ENCODE measurements at regions of chr12 and their contacts with region 1.

Region 1: DNA sequence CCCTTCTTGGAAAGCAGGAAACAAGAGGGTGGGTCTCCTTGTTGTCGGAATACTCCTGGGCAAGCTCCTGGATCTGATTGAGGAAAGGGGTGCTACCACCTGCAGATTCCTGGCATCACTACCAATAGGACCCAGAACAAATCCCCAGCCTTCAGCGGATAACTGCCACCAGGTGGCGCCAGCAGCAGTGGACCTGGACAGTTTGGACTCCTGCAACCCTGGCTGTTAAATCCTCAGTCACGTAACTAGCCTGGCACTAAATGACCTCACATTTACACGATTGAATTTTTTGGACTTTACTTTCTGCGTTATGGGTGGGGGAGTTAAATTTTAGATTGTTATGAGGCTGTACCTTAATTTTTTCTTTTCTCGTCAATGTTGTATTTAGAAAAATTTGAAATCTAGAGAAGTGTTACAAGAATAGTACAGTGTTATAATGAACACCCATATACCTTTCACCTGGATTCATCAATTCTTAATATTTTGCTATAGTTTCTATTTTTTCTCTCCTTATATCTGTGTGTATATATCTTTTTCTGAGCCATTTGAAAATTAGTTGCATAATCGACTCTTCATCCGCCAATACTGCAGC is 95.6 kb downstream of the GAS2L3 start:
- DNase-seq: no peak
- ATAC-seq: peak; percentile 94
- H3K4me3 ChIP-seq: no peak overlapping the region
- H3K27ac ChIP-seq: no peak overlapping the region
- H3K4me1 ChIP-seq: no peaks in the 10 kb centered on the region
- H3K27me3 ChIP-seq: no peaks in the 10 kb centered on the region; a peak in 2 of 4 replicates
- CTCF ChIP-seq: peak; percentile 80 to 93 (median 89)
- EP300 ChIP-seq: no peak
- POLR2A ChIP-seq: no peak
- RAD21 ChIP-seq: peak; percentile 66

Region 2: DNA sequence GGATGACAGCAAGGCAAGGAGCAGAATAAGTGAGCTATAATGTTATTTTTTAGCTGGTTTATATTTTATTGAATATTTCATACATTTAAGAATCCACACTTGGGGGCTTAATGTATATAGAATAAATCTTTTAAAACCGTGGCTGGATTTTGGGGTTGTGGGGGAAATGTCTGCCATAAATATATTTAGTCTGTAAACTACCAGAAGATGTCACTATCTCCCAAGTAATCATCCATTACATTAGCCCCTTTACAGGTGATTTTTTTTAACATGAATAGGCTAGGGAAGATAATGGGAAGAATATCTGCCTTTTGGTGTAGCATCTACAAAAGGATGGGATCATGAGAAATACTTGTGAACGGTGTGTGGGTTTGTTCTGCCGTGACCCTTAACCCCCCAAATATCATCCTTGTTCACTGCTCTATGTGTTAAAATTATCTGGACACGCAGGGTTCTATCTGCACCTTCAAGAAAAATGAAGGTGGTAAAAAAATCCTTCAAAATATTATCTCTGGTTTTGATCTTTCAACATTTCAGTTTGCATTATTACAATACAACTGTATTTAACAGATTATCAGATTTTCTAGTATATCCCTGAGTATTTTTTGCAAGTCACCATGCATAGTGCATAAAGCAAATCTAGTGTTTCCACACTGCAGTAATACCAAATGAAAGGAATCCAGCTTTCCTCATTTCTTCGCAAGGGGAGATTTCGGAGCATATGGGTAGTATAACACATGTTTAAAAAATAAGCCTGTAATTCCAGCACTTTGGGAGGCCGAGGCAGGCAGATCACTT is 320.2 kb before region 1 on chr12:
- CTCF ChIA-PET with region 1: interaction called, 30 read pairs
- POLR2A ChIA-PET with region 1: no interaction called
- RAD21 ChIA-PET with region 1: interaction called, 5 read pairs
- SMC1A ChIA-PET with region 1: interaction called, 9 read pairs
- in situ Hi-C with region 1: loop called (anchors 10 kb)
- intact Hi-C with region 1: loop called (anchors 2 kb)
- DNase-seq: no peak
- ATAC-seq: peak; percentile 58; the same call in 2 of the 3 replicates
- H3K4me3 ChIP-seq: no peak overlapping the region
- H3K27ac ChIP-seq: no peak overlapping the region
- H3K4me1 ChIP-seq: no peaks in the 10 kb centered on the region
- H3K27me3 ChIP-seq: no peaks in the 10 kb centered on the region
- CTCF ChIP-seq: peak in 2 of 3 experiments; percentile 8 to 48; a peak in 2 of 6 replicates
- EP300 ChIP-seq: no peak
- POLR2A ChIP-seq: no peak
- RAD21 ChIP-seq: peak; percentile 59

Region 3: DNA sequence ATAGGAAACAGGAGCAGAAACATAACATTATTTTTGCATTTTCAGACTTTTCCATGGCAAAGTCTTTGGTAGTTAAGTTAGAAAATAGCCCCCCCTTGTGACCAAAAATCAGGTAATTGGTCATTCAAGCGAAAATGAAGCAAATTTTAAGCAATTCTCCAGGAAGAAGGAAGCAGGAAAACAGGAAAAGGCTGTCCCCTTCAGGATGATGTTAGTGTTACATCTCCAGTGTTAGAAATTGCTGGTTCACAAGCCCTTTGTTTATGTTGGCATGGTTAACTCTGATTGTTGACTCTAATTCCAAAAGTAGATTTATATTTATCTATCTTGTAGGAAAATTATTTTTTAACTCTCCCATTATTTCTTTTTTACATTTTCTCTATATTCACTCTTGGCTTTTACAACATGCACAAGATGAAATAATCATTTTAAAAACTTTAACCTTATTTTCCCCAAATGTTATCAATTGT is 114.4 kb before region 1 on chr12:
- CTCF ChIA-PET with region 1: interaction called, 12 read pairs
- POLR2A ChIA-PET with region 1: no interaction called
- RAD21 ChIA-PET with region 1: interaction called, 3 read pairs
- SMC1A ChIA-PET with region 1: no interaction called
- in situ Hi-C with region 1: no loop called
- intact Hi-C with region 1: no loop called
- DNase-seq: no peak
- ATAC-seq: peak; percentile 34; the same call in 2 of the 3 replicates
- H3K4me3 ChIP-seq: no peak overlapping the region
- H3K27ac ChIP-seq: no peak overlapping the region
- H3K4me1 ChIP-seq: no peaks in the 10 kb centered on the region
- H3K27me3 ChIP-seq: no peaks in the 10 kb centered on the region
- CTCF ChIP-seq: peak; percentile 44 to 59 (median 50); a peak in 5 of 6 replicates
- EP300 ChIP-seq: no peak
- POLR2A ChIP-seq: no peak
- RAD21 ChIP-seq: peak; percentile 63

Region 4: GRCh38 chr12:100632445-100632892 is 36.6 kb before region 1 on chr12:
- CTCF ChIA-PET with region 1: interaction called, 13 read pairs
- POLR2A ChIA-PET with region 1: no interaction called
- RAD21 ChIA-PET with region 1: interaction called, 3 read pairs
- SMC1A ChIA-PET with region 1: interaction called, 4 read pairs
- in situ Hi-C with region 1: no loop called
- intact Hi-C with region 1: no loop called
- DNase-seq: peak; percentile 4
- ATAC-seq: peak; percentile 67
- H3K4me3 ChIP-seq: no peak overlapping the region
- H3K27ac ChIP-seq: no peak overlapping the region
- H3K4me1 ChIP-seq: no peaks in the 10 kb centered on the region
- H3K27me3 ChIP-seq: no peaks in the 10 kb centered on the region
- CTCF ChIP-seq: no peak
- EP300 ChIP-seq: no peak
- POLR2A ChIP-seq: no peak
- RAD21 ChIP-seq: no peak

Region 5: DNA sequence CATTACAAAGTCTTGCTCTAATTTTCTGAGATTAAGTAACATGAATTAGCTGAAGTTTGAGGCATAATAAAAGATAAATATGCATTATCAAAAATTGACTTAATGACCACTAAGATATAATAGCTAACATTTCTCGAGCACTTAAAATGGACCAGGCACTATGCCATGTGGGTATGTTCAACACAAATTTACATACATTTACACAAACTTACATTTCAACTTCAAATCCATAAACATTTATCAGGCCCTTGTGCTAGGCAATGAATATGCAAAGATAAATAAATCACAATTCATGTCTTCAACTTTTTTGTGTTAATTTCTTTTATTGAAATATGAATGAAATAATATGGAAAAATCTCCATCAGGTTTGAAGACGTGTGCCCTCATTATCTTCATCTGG is 13.1 kb after region 1 on chr12:
- CTCF ChIA-PET with region 1: interaction called, 13 read pairs
- POLR2A ChIA-PET with region 1: no interaction called
- RAD21 ChIA-PET with region 1: no interaction called
- SMC1A ChIA-PET with region 1: interaction called, 4 read pairs
- in situ Hi-C with region 1: no loop called
- intact Hi-C with region 1: no loop called
- DNase-seq: no peak
- ATAC-seq: no peak
- H3K4me3 ChIP-seq: no peak overlapping the region
- H3K27ac ChIP-seq: no peak overlapping the region
- H3K4me1 ChIP-seq: no peaks in the 10 kb centered on the region
- H3K27me3 ChIP-seq: no peaks in the 10 kb centered on the region
- CTCF ChIP-seq: no peak
- EP300 ChIP-seq: no peak
- POLR2A ChIP-seq: no peak
- RAD21 ChIP-seq: no peak

Measured in GM12878 (cell line).